Endothelial cell of umbilical vein (primary cell): ENCODE measurements at regions of chr4 and their contacts with region 1.

Region 1: DNA sequence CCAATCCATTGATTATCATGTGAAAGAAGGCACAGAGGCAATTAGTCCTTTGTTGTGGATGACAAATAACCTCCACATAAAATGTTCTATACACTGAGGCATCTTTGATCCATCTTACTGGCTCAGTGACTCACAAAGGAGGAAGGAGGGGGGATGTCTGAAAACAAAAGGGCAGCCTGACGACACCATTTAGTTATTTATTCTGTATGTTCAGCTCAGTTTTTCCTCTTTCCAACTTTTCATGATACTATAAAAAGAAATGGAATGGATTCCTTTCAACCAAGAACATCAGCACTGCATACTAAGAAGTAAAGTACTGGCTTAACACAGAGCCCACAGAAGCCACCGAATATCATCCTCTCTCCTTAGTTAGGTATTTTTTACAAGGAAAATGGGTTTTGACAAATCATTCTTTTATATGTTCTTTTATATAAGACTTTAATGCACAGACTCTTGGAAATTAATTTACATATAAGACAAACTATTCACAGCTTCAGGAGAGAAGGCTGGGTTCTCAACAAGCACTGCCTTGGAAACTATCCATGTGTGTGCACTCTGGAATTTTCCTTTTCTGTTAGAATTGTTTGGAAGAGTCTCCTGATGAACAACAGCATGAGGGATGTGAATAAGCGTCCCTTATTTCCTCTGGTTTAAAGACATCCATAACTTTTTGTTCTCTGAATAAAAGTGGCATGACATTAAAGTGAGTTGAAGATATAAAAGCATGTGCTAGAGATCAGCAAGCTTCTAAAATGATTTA is 135.6 kb downstream of the TSPAN5 start:
- DNase-seq: peak; percentile 91
- H3K4me3 ChIP-seq: peak overlapping the region in 1 of 3 experiments; percentile 45
- H3K27ac ChIP-seq: peak overlapping the region; percentile 97
- H3K4me1 ChIP-seq: peaks cover 52% of the 10 kb centered on the region
- H3K27me3 ChIP-seq: no peaks in the 10 kb centered on the region
- CTCF ChIP-seq: no peak
- POLR2A ChIP-seq: no peak

Region 2: GRCh38 chr4:98482847-98483806 is 39.7 kb before region 1 on chr4:
- CTCF ChIA-PET with region 1: no interaction called
- POLR2A ChIA-PET with region 1: no interaction called
- dilution Hi-C with region 1: no loop called
- intact Hi-C with region 1: loop called (anchors 5 kb)
- DNase-seq: peak; percentile 51
- H3K4me3 ChIP-seq: no peak overlapping the region
- H3K27ac ChIP-seq: peak overlapping the region; percentile 65
- H3K4me1 ChIP-seq: peaks cover 22% of the 10 kb centered on the region
- H3K27me3 ChIP-seq: no peaks in the 10 kb centered on the region
- CTCF ChIP-seq: no peak
- POLR2A ChIP-seq: no peak